Activated naive CD4-positive, alpha-beta T cell treated with anti-CD3 and anti-CD28 coated beads for 36 hours (primary cell): ENCODE measurements at regions of chr9 and their contacts with region 1.

Region 1: DNA sequence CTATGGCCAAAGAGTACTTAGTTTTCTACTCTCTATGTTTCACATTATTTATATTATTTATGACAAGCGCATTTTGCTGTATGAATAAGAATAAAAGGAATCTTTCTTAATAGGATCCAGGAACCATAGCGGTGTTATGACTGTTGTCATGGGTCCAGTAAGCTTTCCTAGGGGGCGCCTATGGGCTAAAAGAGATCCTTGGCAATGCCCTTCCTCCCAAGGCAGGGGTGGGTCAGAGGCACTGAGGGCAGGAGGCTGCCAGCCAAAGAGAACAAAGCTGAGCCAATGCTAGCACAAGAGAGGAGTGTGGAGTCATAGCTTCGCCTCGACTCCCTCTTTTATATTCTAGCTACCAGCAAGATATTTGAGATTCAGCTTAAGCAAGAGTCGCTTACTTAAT is 98.4 kb upstream of the GNAQ start:
- DNase-seq: no peak
- H3K4me3 Mint-ChIP-seq: no peak overlapping the region
- H3K27ac Mint-ChIP-seq: no peak overlapping the region
- H3K4me1 Mint-ChIP-seq: peaks cover 16% of the 10 kb centered on the region
- H3K27me3 Mint-ChIP-seq: no peaks in the 10 kb centered on the region

Region 2: GRCh38 chr9:77725820-77726219 is 404.2 kb before region 1 on chr9:
- CTCF ChIA-PET with region 1: no interaction called
- intact Hi-C with region 1: loop called (anchors 5 kb)
- DNase-seq: peak; percentile 59
- H3K4me3 Mint-ChIP-seq: no peak overlapping the region
- H3K27ac Mint-ChIP-seq: peak overlapping the region; percentile 57
- H3K4me1 Mint-ChIP-seq: peaks cover 49% of the 10 kb centered on the region
- H3K27me3 Mint-ChIP-seq: no peaks in the 10 kb centered on the region

Region 3: DNA sequence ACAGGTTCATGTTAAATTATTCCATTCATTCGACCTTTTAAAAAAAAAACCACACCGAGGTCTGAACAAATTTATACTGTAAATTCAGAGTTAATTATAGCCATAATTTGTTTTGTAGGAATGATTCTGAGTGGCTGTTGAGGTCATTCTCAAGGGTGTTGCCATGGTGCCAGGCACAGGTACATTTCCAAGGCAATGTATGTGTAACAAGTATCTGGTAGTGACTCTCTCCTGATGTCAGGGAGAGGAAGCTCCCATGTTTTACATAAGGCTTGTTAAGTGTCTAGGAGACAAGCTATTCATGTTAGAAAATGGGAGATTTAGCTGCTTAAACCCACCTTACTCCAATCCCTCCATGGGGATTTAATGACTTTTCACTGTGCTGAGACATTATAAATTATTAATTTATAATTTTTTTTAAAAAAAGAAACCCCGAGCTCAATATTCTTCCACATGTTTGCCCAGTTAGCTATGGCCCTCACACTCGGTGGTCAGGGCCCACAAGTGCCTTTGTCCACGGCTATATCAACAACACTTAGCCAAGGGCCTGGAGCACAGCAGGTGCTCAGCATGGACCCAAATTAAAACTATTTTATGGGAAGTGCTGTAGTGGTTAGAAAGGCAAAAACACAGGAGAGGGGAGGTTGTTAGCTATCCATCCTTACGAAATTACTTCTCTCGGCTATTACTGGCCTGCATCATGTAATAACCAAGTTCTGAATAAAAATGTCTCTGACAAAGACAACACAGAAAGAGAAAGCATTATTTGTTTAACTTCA is 327.3 kb before region 1 on chr9:
- CTCF ChIA-PET with region 1: no interaction called
- intact Hi-C with region 1: no loop called
- DNase-seq: no peak
- H3K4me3 Mint-ChIP-seq: no peak overlapping the region
- H3K27ac Mint-ChIP-seq: no peak overlapping the region
- H3K4me1 Mint-ChIP-seq: peaks cover 10% of the 10 kb centered on the region
- H3K27me3 Mint-ChIP-seq: no peaks in the 10 kb centered on the region

Region 4: GRCh38 chr9:78158286-78158685 is 28.3 kb after region 1 on chr9:
- CTCF ChIA-PET with region 1: no interaction called
- intact Hi-C with region 1: no loop called
- DNase-seq: no peak
- H3K4me3 Mint-ChIP-seq: no peak overlapping the region
- H3K27ac Mint-ChIP-seq: no peak overlapping the region
- H3K4me1 Mint-ChIP-seq: no peaks in the 10 kb centered on the region
- H3K27me3 Mint-ChIP-seq: no peaks in the 10 kb centered on the region

Region 5: DNA sequence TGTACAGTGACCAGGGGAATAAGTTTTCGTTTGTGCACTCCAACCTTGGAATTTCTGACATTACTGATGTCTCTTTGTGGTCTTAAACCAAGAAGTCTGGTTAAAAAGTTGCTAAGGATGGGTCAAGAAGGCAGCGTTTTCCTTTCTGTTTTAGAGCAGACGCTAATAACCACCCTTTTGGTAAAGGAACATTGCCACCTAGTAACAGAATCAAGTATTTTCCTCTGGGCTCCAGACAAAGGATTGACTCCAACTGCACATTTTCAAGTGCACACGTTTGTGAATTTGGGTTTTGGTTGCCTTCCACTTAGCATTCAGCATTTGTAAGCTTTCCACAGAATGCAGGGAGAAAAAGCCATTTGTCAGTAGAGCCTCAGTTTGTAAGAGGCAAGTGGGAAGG is 83.7 kb after region 1 on chr9:
- CTCF ChIA-PET with region 1: no interaction called
- intact Hi-C with region 1: loop called (anchors 1 kb)
- DNase-seq: no peak
- H3K4me3 Mint-ChIP-seq: no peak overlapping the region
- H3K27ac Mint-ChIP-seq: no peak overlapping the region
- H3K4me1 Mint-ChIP-seq: peaks cover 31% of the 10 kb centered on the region
- H3K27me3 Mint-ChIP-seq: no peaks in the 10 kb centered on the region

Region 6: GRCh38 chr9:78235756-78236538 is 105.9 kb after region 1 on chr9 and contains the start of gene CEP78:
- CTCF ChIA-PET with region 1: no interaction called
- intact Hi-C with region 1: loop called (anchors 1 kb)
- DNase-seq: peak; percentile 91
- H3K4me3 Mint-ChIP-seq: peak within 1 kb of the TSS; percentile 96
- H3K27ac Mint-ChIP-seq: peak within 1 kb of the TSS; percentile 91
- H3K4me1 Mint-ChIP-seq: peaks cover 34% of the 10 kb centered on the region
- H3K27me3 Mint-ChIP-seq: no peaks in the 10 kb centered on the region
- total RNA-seq, gene CEP78: 39.5 to 39.7 TPM

Region 7: GRCh38 chr9:78296893-78297671 is 167.1 kb after region 1 on chr9 and contains the start of gene PSAT1:
- CTCF ChIA-PET with region 1: no interaction called
- intact Hi-C with region 1: loop called (anchors 5 kb)
- DNase-seq: peak; percentile 95
- H3K4me3 Mint-ChIP-seq: peak within 1 kb of the TSS; percentile 81
- H3K27ac Mint-ChIP-seq: peak within 1 kb of the TSS; percentile 94
- H3K4me1 Mint-ChIP-seq: peaks cover 40% of the 10 kb centered on the region
- H3K27me3 Mint-ChIP-seq: no peaks in the 10 kb centered on the region
- total RNA-seq, gene PSAT1: 235 to 240 TPM

Region 8: GRCh38 chr9:78369639-78370219 is 239.7 kb after region 1 on chr9:
- CTCF ChIA-PET with region 1: no interaction called
- intact Hi-C with region 1: loop called (anchors 5 kb)
- DNase-seq: peak; percentile 68
- H3K4me3 Mint-ChIP-seq: no peak overlapping the region
- H3K27ac Mint-ChIP-seq: no peak overlapping the region
- H3K4me1 Mint-ChIP-seq: no peaks in the 10 kb centered on the region
- H3K27me3 Mint-ChIP-seq: peaks cover 4% of the 10 kb centered on the region

Region 9: DNA sequence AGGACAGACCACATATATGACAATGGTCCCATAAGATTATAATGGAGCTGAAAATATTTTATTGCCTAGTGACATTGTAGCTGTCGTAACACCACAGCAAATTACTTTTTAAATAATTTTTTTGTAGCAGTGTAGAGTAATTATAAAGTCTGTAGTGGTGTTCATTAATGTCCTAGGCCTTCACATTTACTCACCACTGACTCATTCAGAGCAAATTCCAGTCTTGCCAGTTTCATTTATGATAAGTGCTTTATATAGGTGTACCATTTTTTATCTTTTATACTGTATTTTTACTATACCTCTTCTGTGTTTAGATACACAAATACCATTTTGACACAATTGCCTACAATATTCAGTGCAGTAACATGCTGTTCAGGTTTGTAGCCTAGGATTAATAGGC is 1509.3 kb after region 1 on chr9:
- CTCF ChIA-PET with region 1: no interaction called
- intact Hi-C with region 1: no loop called
- DNase-seq: no peak
- H3K4me3 Mint-ChIP-seq: no peak overlapping the region
- H3K27ac Mint-ChIP-seq: no peak overlapping the region
- H3K4me1 Mint-ChIP-seq: peaks cover 51% of the 10 kb centered on the region
- H3K27me3 Mint-ChIP-seq: no peaks in the 10 kb centered on the region